ENCODE measurements at regions of chr6 and their contacts with region 1.

Region 1: DNA sequence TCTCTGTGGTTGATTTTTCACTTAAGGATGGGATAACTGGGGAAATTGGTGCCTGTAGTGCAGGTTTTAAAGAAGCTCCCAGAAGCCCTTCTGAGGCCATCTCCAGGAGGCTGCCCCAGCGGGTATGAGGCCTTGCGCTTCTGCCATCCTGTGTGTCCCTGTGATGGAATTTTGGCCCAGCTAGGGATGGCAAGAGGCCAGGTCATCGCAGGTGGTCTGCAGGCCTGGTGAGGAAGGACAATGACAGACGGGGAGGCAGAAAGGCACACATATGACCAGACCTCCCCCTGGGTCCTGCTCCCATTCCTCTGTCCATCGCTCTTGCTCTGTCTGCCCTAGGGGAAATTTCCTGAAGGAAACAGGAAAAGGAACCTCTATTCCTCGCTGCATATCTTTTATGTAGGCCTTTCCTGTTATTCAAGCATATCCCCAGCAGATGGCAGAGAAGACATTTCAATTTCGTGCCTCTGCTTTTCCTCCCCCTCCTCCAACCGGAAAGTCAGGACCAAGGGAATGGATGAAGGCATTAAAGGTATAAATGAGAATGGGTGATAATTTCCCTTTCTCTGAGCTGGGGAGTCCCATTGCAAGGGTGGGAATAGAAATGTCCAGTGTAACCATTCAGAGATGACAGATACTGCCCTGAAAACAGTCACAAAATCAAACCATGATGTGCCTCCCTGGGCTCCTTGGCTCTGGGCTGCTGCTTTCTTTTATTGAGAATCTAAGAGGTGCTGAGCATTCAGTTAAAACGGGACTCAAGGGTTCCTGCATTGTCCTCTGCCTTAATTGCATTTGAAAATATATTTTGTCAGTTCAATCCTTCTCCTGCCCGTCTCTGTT is 17.6 kb upstream of the HLA-F start:
- DNase-seq: peak in 1 of 3 donors; percentile 68
- ATAC-seq: peak; percentile 31
- H3K4me3 ChIP-seq: no peak overlapping the region
- H3K4me1 ChIP-seq: peaks cover 2% of the 10 kb centered on the region
- CTCF ChIP-seq: no peak

Region 2: GRCh38 chr6:29834564-29835436 is 129.2 kb after region 1 on chr6:
- intact Hi-C with region 1: loop called (anchors 5 to 10 kb)
- DNase-seq: peak in 2 of 3 donors; percentile 56 to 61
- ATAC-seq: peak; percentile 78
- H3K4me3 ChIP-seq: no peak overlapping the region
- H3K4me1 ChIP-seq: no peaks in the 10 kb centered on the region
- CTCF ChIP-seq: peak; percentile 74